Astrocyte of the cerebellum (primary cell): ENCODE measurements at regions of chr7 and their contacts with region 1.

Region 1: GRCh38 chr7:106153891-106154449 is 41.9 kb upstream of the SYPL1 start:
- DNase-seq: peak; percentile 67
- H3K4me3 ChIP-seq: no peak overlapping the region
- CTCF ChIP-seq: peak; percentile 96

Region 2: GRCh38 chr7:105769901-105770628 is 383.9 kb before region 1 on chr7:
- in situ Hi-C with region 1: loop called (anchors 5 kb)
- DNase-seq: no peak
- H3K4me3 ChIP-seq: no peak overlapping the region
- CTCF ChIP-seq: no peak

Region 3: GRCh38 chr7:105896407-105896911 is 257.5 kb before region 1 on chr7:
- in situ Hi-C with region 1: no loop called
- DNase-seq: no peak
- H3K4me3 ChIP-seq: no peak overlapping the region
- CTCF ChIP-seq: no peak

Region 4: DNA sequence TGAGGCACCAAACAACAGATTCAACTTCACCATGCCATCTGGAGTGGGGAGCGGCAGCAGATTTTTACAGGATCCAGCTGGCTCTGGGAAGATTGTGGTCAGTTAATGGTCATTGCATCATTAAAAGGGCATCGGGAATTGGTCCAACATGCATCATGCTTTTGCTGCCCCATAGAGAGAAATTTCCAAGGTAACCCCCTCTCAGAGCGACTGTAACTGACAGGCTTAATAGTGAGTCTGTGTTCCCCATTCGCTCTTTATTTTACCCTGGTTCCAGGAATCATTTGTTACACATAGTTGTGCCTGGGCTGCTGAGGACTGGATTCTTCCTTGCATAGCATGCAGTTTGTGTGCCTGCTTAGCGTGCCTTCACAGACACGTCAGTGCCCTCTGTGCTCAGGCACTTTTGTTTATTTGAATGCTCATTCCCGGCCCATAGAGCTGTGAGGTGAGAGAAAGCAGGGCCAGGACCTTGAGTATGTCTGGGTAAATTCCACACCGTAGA is 141.0 kb before region 1 on chr7:
- in situ Hi-C with region 1: no loop called
- DNase-seq: peak; percentile 77
- H3K4me3 ChIP-seq: no peak overlapping the region
- CTCF ChIP-seq: no peak

Region 5: DNA sequence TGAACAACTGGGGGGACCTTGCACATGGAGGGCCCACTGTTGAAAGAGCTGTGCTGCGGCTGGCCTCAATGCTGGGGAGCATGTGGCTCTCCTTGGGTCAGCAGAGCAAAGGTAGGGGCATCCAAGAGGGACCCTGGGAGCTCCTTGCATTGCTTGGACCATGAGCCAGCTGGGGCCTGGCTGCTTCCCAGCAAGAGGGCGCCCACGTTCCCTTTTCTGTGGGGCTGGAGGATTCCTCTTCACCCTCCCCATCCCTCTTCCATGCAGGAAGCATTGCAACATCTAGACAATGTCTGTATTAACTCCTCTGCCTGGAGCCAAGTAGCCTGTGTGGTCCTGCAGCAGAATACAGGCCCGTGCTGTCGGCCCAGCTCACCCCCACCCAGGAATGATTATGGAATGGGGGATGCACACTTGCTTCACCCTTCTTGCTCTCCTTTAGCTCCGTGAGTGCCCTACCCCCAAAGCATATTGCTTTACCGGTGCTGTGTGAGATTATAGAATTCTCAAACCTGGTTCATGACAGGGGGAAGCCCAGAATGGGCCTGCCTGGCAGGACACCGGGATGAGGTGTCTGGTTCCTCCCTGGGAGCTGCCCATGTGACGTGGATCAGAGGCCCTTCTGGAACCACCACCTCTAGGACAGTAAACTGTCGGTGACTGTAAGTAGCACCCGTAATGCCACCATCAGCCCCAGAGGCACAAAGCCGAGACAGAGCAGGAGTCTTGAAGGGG is 103.8 kb before region 1 on chr7:
- in situ Hi-C with region 1: loop called (anchors 5 kb)
- DNase-seq: no peak
- H3K4me3 ChIP-seq: no peak overlapping the region
- CTCF ChIP-seq: no peak

Region 6: GRCh38 chr7:106329971-106330733 is 176.2 kb after region 1 on chr7:
- in situ Hi-C with region 1: no loop called
- DNase-seq: peak; percentile 49
- H3K4me3 ChIP-seq: no peak overlapping the region
- CTCF ChIP-seq: no peak

Region 7: DNA sequence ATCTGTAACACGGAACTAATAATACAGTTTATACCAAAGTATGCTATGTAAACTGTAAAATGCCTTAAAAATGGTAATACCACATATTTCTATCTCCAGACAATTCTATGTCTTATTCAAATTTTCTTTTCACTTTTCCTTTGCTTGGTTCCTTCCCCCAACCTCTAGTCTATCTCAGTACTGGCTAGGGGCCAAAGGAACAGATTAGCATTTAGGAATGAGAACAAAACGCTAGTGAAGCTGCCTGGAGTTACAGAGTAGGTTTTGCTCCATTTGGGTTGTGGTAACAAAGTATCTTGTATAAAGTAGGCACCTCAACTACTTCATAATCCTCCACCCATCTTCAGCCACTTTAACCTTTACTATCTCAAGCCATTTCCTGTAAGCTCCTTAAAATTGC is 1108.9 kb after region 1 on chr7:
- in situ Hi-C with region 1: no loop called
- DNase-seq: no peak
- H3K4me3 ChIP-seq: no peak overlapping the region
- CTCF ChIP-seq: no peak